Calu3 (cell line): ENCODE measurements at regions of chr3 and their contacts with region 1.

Region 1: DNA sequence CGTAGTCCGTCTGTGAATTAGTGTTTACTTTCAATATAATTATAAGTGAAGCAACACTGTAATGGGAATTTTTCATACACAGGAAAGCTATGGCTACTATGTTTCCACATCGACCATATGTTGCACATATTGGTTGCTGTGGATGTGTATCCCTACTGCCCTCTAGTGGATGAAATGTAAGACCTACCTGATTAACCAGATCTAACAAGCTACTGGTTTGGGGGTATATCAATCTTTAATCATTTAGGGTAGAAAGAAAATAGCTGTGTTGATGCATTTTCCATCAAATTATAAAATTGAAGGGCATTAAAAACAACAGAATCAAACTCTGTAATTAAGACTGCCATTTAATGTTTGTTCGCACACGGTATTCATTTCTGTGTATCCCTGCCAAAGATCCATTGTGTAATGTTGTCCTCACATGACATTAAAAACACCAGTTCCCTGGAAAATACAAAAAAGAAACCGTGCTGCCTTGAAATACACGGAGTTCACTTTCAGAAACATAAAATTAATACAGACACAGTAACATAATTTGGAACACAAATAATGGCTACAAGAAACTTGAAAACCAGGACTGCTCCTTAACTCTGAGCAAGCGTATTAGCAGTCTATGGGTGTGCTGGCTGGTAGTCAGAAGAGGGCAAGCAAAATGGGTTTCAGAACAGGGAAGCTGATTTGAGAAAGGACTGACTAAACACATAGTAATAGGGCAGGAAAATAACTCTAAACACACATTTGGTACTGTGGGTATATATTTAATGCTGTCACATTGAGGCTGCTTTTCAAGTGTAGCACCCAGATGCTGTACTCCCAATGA is 125.1 kb downstream of the TIGIT start:
- DNase-seq: no peak
- H3K4me3 Mint-ChIP-seq: no peak overlapping the region
- H3K27ac Mint-ChIP-seq: no peak overlapping the region
- H3K4me1 Mint-ChIP-seq: no peaks in the 10 kb centered on the region
- H3K27me3 Mint-ChIP-seq: no peaks in the 10 kb centered on the region
- CTCF ChIP-seq: peak; percentile 45

Region 2: GRCh38 chr3:114362815-114363214 is 56.1 kb before region 1 on chr3:
- CTCF ChIA-PET with region 1: interaction called, 7 read pairs
- intact Hi-C with region 1: loop called (anchors 2 kb)
- DNase-seq: no peak
- H3K4me3 Mint-ChIP-seq: no peak overlapping the region
- H3K27ac Mint-ChIP-seq: no peak overlapping the region
- H3K4me1 Mint-ChIP-seq: peaks cover 9% of the 10 kb centered on the region
- H3K27me3 Mint-ChIP-seq: no peaks in the 10 kb centered on the region
- CTCF ChIP-seq: peak; percentile 26

Region 3: GRCh38 chr3:114383875-114384557 is 34.9 kb before region 1 on chr3:
- CTCF ChIA-PET with region 1: interaction called, 27 read pairs
- intact Hi-C with region 1: loop called (anchors 1 kb)
- DNase-seq: peak; percentile 75
- H3K4me3 Mint-ChIP-seq: peak overlapping the region; percentile 16
- H3K27ac Mint-ChIP-seq: peak overlapping the region; percentile 57
- H3K4me1 Mint-ChIP-seq: no peaks in the 10 kb centered on the region
- H3K27me3 Mint-ChIP-seq: no peaks in the 10 kb centered on the region
- CTCF ChIP-seq: peak; percentile 55

Region 4: DNA sequence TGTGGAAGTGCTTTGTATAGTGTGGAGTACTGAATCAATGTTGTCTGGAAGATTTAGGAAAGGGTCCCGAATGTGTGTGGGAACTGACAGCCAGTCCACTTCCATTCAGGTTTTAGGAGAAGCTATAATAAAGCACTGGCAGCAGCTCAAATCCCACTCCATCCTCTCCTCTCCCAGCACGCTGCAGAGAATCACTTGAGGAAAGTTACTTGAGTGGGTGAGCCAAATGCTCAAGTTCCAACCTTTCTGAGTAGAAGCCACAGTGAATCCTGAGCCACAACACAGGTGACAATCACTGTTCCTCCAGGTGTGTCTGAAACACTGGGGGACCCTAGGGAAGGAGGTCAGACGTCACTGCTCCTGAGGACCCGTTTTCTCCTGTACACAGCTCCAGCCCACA is 18.6 kb before region 1 on chr3:
- CTCF ChIA-PET with region 1: interaction called, 12 read pairs
- intact Hi-C with region 1: no loop called
- DNase-seq: no peak
- H3K4me3 Mint-ChIP-seq: peak overlapping the region; percentile 43
- H3K27ac Mint-ChIP-seq: peak overlapping the region; percentile 81
- H3K4me1 Mint-ChIP-seq: peaks cover 42% of the 10 kb centered on the region
- H3K27me3 Mint-ChIP-seq: no peaks in the 10 kb centered on the region
- CTCF ChIP-seq: no peak

Region 5: GRCh38 chr3:114405202-114405990 is 13.5 kb before region 1 on chr3:
- CTCF ChIA-PET with region 1: interaction called, 12 read pairs
- intact Hi-C with region 1: no loop called
- DNase-seq: no peak
- H3K4me3 Mint-ChIP-seq: no peak overlapping the region
- H3K27ac Mint-ChIP-seq: no peak overlapping the region
- H3K4me1 Mint-ChIP-seq: peaks cover 38% of the 10 kb centered on the region
- H3K27me3 Mint-ChIP-seq: no peaks in the 10 kb centered on the region
- CTCF ChIP-seq: no peak

Region 6: DNA sequence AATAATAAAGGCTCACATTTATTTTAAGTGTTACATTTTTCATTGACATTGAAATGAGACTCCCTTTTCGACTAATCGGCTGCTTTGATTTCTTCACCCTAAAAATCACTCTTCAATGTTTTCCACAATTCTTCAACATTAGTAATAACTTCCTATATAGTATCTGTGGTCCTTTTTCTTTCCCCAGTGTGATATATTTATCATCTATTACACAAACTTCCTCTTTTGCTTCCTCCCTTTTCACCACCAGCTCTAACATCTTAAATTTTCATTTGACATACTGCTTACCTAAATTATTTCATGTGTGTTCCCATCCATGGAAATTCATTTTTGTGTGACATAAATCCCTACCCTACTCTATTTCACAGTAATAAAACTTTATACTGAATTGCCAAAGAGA is 119.3 kb after region 1 on chr3:
- CTCF ChIA-PET with region 1: no interaction called
- intact Hi-C with region 1: no loop called
- DNase-seq: no peak
- H3K4me3 Mint-ChIP-seq: no peak overlapping the region
- H3K27ac Mint-ChIP-seq: no peak overlapping the region
- H3K4me1 Mint-ChIP-seq: no peaks in the 10 kb centered on the region
- H3K27me3 Mint-ChIP-seq: no peaks in the 10 kb centered on the region
- CTCF ChIP-seq: no peak